PC-9 (cell line): ENCODE measurements at regions of chr3 and their contacts with region 1.

Region 1: DNA sequence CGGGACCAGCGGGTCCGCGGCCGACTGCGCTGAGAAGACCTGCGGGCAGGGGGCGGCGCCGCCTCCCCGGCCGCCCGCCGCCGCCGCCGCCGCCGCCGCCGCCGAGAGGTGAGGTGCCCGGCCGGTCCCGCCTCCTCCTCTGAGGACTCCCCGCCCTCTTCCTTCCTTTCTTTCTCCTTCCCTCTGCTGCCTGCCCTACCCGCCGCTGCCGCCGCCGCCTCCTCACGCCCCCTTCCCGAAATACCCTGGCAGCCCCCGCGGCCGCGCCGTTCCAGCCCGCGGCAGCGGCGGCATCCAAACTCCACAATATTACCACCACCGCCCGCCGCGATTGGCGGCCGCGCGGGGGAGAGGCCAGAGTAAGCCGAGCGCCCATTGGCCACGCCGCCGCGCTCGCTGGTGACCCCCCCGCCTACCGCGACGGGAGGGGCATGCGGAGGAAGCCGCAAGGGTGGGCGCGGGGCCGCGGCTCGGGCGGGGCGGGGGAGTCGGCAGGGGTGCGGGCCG is 61.8 kb upstream of the ANKRD28 start:
- DNase-seq: peak; percentile 64 to 89
- H3K4me3 ChIP-seq: peak overlapping the region; percentile 96
- H3K27ac ChIP-seq: peak overlapping the region; percentile 73
- H3K4me1 ChIP-seq: peaks cover 29% of the 10 kb centered on the region
- H3K27me3 ChIP-seq: no peaks in the 10 kb centered on the region
- CTCF ChIP-seq: no peak

Region 2: DNA sequence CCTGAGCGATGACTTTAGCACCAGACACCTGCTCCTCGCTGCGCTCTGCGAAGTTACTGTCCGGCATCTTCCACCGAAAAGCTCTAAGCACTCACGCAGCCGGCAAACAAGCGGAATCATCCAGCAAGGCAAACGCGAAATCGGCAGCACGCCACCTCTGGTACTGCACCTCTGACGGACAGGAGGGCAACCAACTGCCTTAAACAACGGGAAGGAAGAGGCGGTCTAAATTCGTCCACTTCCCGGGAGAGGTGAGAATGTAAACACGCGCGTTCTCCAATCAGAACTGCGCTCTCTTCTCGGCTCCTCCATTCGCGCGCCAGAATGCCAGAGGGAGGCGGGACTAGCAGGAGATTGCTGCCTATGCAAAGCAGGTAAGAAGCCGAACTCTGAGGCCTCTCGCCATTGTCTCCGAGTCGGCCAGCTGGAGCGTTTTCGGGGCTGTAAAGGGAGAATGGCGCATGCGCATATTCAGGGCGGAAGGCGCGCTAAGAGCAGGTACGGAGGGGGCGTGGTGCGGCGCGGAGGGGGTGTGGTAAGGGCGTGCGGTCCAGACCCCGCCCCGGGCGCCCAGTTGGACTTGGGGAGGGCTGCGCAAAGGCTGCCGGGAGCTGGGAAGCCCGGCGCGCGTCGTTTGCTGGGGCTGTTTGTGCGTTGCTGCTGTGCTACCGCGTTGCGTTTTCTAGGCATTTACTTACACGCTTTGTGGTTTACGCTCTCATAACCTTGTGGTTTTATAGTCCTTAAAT is 258.0 kb before region 1 on chr3 and contains the starts of genes BTD and HACL1:
- CTCF ChIA-PET with region 1: no interaction called
- POLR2A ChIA-PET with region 1: no interaction called
- intact Hi-C with region 1: loop called (anchors 2 kb)
- DNase-seq: peak; percentile 96 to 98
- H3K4me3 ChIP-seq: peak within 1 kb of the TSS; percentile 79
- H3K27ac ChIP-seq: peak within 1 kb of the TSS; percentile 66
- H3K4me1 ChIP-seq: peaks cover 18% of the 10 kb centered on the region
- H3K27me3 ChIP-seq: no peaks in the 10 kb centered on the region
- CTCF ChIP-seq: peak; percentile 33; the same call in 1 of the 2 replicates
- total RNA-seq, gene BTD: 15.6 and 18.1 TPM in 2 replicates
- total RNA-seq, gene HACL1: 28.7 and 31.7 TPM in 2 replicates

Region 3: DNA sequence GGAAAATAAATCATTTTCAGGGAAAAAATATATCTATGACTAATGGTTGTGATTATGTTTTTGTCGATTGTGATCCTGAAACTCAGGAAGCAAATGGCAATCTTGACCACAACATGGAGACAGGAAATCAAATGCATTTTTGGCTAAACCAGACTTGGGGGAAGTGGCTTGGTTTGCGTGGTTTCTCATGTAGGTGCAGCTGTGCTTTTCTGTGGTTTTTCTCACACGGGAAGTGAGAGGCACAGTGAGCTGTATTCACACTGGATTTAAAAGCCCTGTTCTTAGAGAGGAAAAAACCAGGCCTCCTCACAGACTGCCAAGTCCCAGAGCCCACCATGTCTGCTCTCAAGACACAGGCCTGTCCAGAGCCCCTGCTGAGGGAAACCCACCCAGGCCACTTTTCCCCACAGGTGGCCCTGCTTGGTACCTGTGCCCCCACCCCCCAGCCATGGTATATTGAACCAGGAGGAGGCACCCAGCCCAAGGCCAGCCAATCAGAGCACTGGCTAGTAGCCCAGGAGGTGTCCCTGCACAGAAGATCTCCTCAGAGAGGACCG is 211.9 kb before region 1 on chr3:
- CTCF ChIA-PET with region 1: no interaction called
- POLR2A ChIA-PET with region 1: no interaction called
- intact Hi-C with region 1: loop called (anchors 2 kb)
- DNase-seq: peak; percentile 25 to 64
- H3K4me3 ChIP-seq: no peak overlapping the region; the same call in 1 of the 2 replicates
- H3K27ac ChIP-seq: peak overlapping the region; percentile 82
- H3K4me1 ChIP-seq: peaks cover 40% of the 10 kb centered on the region
- H3K27me3 ChIP-seq: no peaks in the 10 kb centered on the region
- CTCF ChIP-seq: no peak

Region 4: DNA sequence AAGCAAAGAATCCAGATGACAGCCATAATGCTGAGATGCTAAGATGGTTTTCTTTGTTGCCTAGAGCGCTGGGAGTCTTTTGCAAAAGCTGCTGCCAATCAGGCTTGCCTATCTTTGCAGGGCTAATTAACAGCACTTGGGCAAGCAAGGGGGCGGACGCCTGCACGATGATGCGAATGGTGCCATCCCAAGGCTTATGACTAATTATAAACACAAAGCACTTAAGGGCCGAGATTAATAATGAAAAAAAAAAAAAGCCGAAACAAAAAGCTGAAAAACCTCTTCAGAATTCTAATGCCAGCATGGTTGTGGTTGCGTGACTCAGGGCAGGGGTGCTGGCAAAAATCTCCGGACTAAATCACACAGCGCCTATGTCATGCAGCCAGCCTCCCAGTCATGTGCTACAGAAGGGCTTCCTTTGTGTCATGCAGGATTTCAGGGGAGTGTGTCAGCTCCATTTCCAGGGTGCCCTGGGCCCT is 123.1 kb after region 1 on chr3:
- CTCF ChIA-PET with region 1: no interaction called
- POLR2A ChIA-PET with region 1: no interaction called
- intact Hi-C with region 1: loop called (anchors 5 kb)
- DNase-seq: peak; percentile 69 to 88
- H3K4me3 ChIP-seq: peak overlapping the region; percentile 38; the same call in 1 of the 2 replicates
- H3K27ac ChIP-seq: peak overlapping the region; percentile 89
- H3K4me1 ChIP-seq: peaks cover 27% of the 10 kb centered on the region
- H3K27me3 ChIP-seq: no peaks in the 10 kb centered on the region
- CTCF ChIP-seq: no peak

Region 5: DNA sequence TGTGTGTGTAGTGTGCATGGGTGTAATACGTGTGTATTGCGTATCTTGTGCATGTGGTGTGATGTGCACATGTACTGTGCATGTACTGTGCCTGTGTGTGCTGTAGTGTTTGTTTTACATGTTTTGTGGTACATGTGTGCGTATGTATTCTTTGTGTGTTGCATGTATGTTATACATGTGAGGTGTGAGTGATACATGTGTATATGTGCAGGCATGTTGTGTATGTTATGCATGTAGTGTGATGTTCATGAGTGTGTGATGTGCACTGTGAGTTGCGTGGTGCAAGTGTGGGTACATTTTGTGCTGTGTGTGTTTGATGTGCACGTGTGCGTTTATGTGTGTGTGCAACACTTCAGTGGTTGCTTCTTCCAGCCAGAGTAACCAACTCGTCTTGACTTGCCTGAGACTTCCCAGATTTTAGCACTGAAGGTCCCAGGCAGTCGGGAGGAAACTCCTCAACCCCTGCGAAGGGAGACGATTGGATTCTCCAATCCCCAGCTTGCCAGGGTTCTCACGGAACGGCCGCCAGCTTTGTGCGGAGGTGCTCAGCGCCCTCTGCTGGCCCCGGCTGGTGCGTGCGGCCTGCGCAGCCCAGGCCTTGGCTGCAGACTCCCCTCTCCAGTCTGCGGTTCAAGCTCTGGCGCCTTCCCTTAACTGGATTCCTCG is 318.5 kb after region 1 on chr3:
- CTCF ChIA-PET with region 1: no interaction called
- POLR2A ChIA-PET with region 1: no interaction called
- intact Hi-C with region 1: loop called (anchors 10 kb)
- DNase-seq: peak in 1 of 2 experiments; percentile 67
- H3K4me3 ChIP-seq: no peak overlapping the region
- H3K27ac ChIP-seq: no peak overlapping the region
- H3K4me1 ChIP-seq: no peaks in the 10 kb centered on the region
- H3K27me3 ChIP-seq: peaks cover 18% of the 10 kb centered on the region; the same call in 1 of the 2 replicates
- CTCF ChIP-seq: peak; percentile 95